HCT116 (cell line): ENCODE measurements at regions of chr7 and their contacts with region 1.

Region 1: GRCh38 chr7:81447351-81447952 is 322.4 kb downstream of the HGF start:
- DNase-seq: peak; percentile 47
- ATAC-seq: peak; percentile 95
- H3K4me3 ChIP-seq: no peak overlapping the region
- H3K27ac ChIP-seq: no peak overlapping the region
- H3K4me1 ChIP-seq: no peaks in the 10 kb centered on the region
- H3K27me3 ChIP-seq: no peaks in the 10 kb centered on the region
- CTCF ChIP-seq: peak; percentile 54 to 62 (median 55); a peak in 5 of 6 replicates
- POLR2A ChIP-seq: no peak
- RAD21 ChIP-seq: peak; percentile 84

Region 2: GRCh38 chr7:81079746-81080145 is 367.7 kb before region 1 on chr7:
- CTCF ChIA-PET with region 1: no interaction called
- POLR2A ChIA-PET with region 1: no interaction called
- RAD21 ChIA-PET with region 1: no interaction called
- intact Hi-C with region 1: no loop called
- DNase-seq: no peak
- ATAC-seq: no peak
- H3K4me3 ChIP-seq: no peak overlapping the region
- H3K27ac ChIP-seq: no peak overlapping the region
- H3K4me1 ChIP-seq: peaks cover 7 to 9% of the 10 kb centered on the region in 2 experiments
- H3K27me3 ChIP-seq: no peaks in the 10 kb centered on the region
- CTCF ChIP-seq: no peak
- POLR2A ChIP-seq: no peak
- RAD21 ChIP-seq: no peak

Region 3: DNA sequence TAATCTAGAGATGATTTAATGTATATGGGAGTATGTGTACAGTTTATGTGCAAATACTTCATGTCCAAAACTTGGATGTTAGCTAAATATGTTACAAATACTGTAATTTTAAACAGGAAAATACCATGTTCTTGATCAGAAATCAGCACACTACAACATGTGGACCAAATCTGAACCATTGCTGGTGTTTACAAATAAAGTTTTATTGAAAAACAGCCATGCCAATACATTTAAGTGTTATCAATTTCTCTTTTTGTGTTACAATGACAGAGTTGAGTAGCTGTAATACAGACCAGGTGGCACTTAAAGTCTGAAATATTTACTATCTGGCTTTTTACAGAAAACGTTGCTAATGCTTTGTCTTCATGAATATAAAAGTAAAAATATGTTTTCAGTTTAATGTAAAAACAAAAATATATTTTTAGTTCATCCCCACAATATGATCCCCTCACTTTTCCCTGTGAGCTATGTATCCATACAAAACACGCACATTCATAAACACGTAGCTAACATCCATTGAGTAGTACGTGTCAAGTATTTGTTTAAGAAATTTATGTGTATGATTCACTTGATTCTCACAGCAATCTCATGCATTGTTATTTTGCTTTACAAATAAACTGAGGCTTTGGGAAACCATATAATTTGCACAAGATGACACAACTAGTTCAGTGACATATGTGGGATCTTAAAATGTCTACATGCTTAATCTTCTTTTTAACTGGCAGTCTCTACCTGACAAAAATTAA is 199.2 kb before region 1 on chr7:
- CTCF ChIA-PET with region 1: no interaction called
- POLR2A ChIA-PET with region 1: no interaction called
- RAD21 ChIA-PET with region 1: no interaction called
- intact Hi-C with region 1: loop called (anchors 2 kb)
- DNase-seq: no peak
- ATAC-seq: no peak
- H3K4me3 ChIP-seq: no peak overlapping the region
- H3K27ac ChIP-seq: no peak overlapping the region
- H3K4me1 ChIP-seq: no peaks in the 10 kb centered on the region
- H3K27me3 ChIP-seq: no peaks in the 10 kb centered on the region
- CTCF ChIP-seq: no peak
- POLR2A ChIP-seq: no peak
- RAD21 ChIP-seq: no peak

Region 4: DNA sequence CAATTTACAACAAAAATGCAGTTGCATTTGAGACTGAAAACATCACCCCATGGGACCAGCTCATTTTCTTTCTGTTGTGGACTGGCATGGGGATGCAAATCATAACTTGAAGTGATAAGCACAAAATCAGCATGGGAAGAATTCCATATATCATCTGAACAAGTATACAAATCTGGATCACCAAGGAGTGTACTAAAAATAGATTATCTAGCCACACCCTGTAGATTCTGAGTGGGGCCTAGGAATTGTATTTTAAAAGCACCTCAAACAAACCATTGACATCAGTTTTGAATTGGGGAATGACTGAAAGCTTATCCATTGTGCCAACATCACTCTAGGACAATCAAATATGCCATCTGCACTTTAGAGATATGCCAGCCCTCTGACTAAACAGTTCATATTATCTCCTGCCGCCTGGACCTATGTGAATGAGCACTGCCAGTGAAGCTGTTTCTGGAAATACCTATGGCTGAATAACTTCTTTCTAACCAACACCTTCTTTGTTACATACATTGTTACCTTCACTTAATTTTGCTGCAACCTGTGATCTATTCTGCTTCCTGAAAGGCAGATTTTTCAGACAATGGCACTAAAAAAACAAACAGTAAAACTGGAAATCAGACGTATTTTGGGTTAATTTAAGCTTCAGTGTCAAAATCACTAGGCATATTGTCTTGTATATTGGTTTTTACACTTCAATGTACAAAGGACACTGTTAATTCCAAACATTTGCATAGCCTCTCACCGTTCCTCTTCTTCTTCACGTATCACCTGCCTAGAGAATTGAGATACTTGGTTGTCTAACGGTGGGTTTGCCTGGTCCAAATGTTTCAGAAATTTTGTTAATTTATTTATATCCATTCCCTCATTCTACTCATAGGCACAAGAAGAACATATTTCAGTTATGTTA is 364.8 kb after region 1 on chr7:
- CTCF ChIA-PET with region 1: no interaction called
- POLR2A ChIA-PET with region 1: no interaction called
- RAD21 ChIA-PET with region 1: no interaction called
- intact Hi-C with region 1: no loop called
- DNase-seq: no peak
- ATAC-seq: no peak
- H3K4me3 ChIP-seq: no peak overlapping the region
- H3K27ac ChIP-seq: no peak overlapping the region
- H3K4me1 ChIP-seq: peaks cover 6 to 17% of the 10 kb centered on the region in 2 experiments
- H3K27me3 ChIP-seq: no peaks in the 10 kb centered on the region
- CTCF ChIP-seq: no peak
- POLR2A ChIP-seq: no peak
- RAD21 ChIP-seq: no peak

Region 5: GRCh38 chr7:82036146-82036886 is 588.9 kb after region 1 on chr7:
- CTCF ChIA-PET with region 1: no interaction called
- POLR2A ChIA-PET with region 1: no interaction called
- RAD21 ChIA-PET with region 1: no interaction called
- intact Hi-C with region 1: no loop called
- DNase-seq: no peak
- ATAC-seq: no peak
- H3K4me3 ChIP-seq: no peak overlapping the region
- H3K27ac ChIP-seq: no peak overlapping the region
- H3K4me1 ChIP-seq: no peaks in the 10 kb centered on the region
- H3K27me3 ChIP-seq: no peaks in the 10 kb centered on the region
- CTCF ChIP-seq: no peak
- POLR2A ChIP-seq: no peak
- RAD21 ChIP-seq: no peak